Activated CD4-positive, alpha-beta memory T cell treated with anti-CD3 and anti-CD28 coated beads for 36 hours (primary cell): ENCODE measurements at regions of chr14 and their contacts with region 1.

Region 1: DNA sequence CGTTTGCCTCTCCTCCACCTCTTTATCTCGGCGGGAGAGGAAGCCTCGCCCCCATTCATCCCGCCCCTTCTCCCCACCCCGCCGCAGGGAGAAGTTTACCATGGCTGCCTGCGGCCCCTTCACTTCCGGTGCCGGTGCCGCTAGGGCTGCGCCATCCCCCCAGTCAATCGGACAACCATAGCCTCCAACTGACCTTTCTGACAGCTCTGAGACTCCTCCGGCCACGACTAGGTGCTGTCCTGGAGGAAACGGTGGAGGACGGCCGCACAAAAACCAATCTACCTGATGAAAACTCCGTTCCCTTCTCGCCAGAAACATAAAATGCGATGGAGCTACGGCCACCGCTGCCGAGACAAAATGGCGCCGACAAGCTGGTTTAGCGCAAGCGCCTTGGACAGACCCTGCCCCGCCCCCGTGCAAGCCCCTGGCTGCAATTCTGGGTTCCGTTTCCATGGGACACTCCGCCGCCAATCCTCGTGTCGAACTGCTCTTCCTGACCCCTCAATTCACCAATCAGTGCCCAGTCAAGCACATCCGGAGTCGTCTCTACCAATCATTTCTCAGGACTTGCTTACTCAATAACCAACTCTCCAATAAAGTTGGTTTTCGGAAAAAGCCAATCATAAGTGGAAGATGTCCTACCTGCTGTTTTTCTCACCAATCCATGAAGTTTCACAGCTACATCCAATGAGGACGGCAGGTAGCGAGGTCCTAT is 436 bp upstream of the ARID4A start:
- DNase-seq: peak; percentile 99
- H3K4me3 Mint-ChIP-seq: no peak overlapping the region
- H3K27ac Mint-ChIP-seq: no peak overlapping the region
- H3K4me1 Mint-ChIP-seq: peaks cover 35% of the 10 kb centered on the region
- H3K27me3 Mint-ChIP-seq: no peaks in the 10 kb centered on the region

Region 2: GRCh38 chr14:58152014-58152857 is 145.7 kb before region 1 on chr14 and contains the start of gene ARMH4:
- CTCF ChIA-PET with region 1: no interaction called
- POLR2A ChIA-PET with region 1: no interaction called
- intact Hi-C with region 1: loop called (anchors 5 kb)
- DNase-seq: peak; percentile 77
- H3K4me3 Mint-ChIP-seq: peak within 1 kb of the TSS; percentile 71
- H3K27ac Mint-ChIP-seq: no peak within 1 kb of the TSS
- H3K4me1 Mint-ChIP-seq: peaks cover 16% of the 10 kb centered on the region
- H3K27me3 Mint-ChIP-seq: peaks cover 52% of the 10 kb centered on the region
- total RNA-seq, gene ARMH4: 0.29 TPM in 1 of 2 experiments, not detected in the other

Region 3: DNA sequence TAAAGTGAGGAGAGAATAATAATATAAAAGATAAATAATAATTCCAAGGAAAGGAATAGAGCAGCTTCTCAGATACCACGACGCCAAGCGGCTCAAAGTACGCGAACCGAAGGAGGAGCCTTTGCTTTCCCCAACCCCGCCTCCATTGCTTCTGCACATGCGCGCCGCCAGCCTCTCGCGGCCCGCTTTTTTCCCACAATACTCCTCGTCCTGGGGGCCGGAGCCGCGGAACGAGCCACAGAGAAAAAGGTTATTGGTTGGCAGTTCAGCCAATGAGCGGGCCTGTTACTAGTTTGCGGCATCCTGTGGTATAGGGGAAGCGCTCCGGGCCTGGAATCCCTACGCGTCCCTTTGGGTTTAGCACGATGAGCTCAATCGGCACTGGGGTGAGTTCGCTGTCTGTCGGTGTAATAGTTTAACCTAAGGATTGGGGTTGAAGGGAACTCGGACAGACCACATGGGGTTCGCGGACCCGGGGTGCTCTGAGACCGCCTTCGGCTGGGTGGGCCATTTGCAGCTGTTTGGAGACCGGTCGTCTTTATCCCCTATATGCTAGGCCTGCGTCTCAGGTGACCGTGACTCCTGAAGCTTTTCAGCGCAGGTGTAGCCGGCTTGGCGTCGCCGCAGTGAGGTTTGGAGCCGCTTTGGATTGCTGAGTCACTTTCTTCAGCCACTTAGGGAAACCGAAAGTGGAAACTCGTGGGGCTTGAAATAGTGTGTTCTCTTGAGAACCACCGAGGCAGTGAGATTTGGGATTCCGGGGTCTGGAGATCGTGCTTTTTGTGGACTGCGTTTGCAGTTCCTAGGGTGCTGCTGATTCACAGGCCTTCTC is 53.1 kb before region 1 on chr14 and contains the start of gene PSMA3:
- CTCF ChIA-PET with region 1: interaction called, 8 read pairs
- POLR2A ChIA-PET with region 1: interaction called, 31 read pairs
- intact Hi-C with region 1: loop called (anchors 1 kb)
- DNase-seq: peak; percentile 99
- H3K4me3 Mint-ChIP-seq: peak within 1 kb of the TSS; percentile 86
- H3K27ac Mint-ChIP-seq: peak within 1 kb of the TSS; percentile 90
- H3K4me1 Mint-ChIP-seq: peaks cover 42% of the 10 kb centered on the region
- H3K27me3 Mint-ChIP-seq: no peaks in the 10 kb centered on the region
- total RNA-seq, gene PSMA3: 349 to 355 TPM

Region 4: DNA sequence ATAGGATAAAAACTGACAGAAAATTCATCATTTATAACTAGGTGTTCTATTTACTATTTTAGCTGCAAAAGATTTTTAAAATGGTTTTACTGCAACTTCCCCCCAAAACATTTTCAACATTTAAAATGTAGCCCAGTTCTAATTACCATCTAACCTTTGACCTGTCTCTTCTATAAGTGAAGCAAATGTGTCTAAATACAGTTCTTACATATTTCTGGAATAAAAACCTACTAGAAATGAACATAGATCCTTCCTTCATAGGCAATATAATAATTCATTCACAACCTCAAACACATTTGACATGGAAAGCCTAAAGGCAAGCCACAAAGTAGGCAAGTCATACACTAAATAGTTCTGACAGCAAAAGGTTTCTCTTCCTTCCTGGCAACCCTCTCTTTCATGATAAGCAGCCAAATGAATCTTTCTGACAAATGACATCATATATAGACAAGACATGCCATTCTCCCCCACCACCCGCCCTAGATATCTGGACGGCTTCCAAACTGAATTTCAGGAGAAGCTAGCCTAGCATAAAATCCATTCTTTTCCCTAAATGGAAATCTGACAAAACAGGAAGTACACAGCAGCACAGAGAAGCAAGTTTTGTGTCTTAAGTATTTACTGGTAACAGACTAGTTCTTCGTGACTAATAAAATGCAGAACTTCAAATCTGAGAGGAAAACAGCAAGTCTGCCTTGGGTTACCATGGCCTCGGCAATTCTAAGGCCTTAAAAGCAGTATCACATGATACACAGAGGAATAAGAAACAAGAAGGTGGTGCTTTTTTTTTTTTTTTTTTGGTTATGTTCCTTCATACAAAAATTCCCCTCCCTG is 16.7 kb before region 1 on chr14:
- CTCF ChIA-PET with region 1: interaction called, 4 read pairs
- POLR2A ChIA-PET with region 1: interaction called, 10 read pairs
- intact Hi-C with region 1: loop called (anchors 1 kb)
- DNase-seq: peak; percentile 56
- H3K4me3 Mint-ChIP-seq: peak overlapping the region; percentile 37
- H3K27ac Mint-ChIP-seq: peak overlapping the region; percentile 91
- H3K4me1 Mint-ChIP-seq: peaks cover 66% of the 10 kb centered on the region
- H3K27me3 Mint-ChIP-seq: no peaks in the 10 kb centered on the region

Region 5: GRCh38 chr14:58427281-58428117 is 129.6 kb after region 1 on chr14 and contains the starts of genes KIAA0586 and TIMM9:
- CTCF ChIA-PET with region 1: no interaction called
- POLR2A ChIA-PET with region 1: interaction called, 37 read pairs
- intact Hi-C with region 1: loop called (anchors 1 kb)
- DNase-seq: peak; percentile 98
- H3K4me3 Mint-ChIP-seq: peak within 1 kb of the TSS; percentile 86
- H3K27ac Mint-ChIP-seq: peak within 1 kb of the TSS; percentile 91
- H3K4me1 Mint-ChIP-seq: peaks cover 45% of the 10 kb centered on the region
- H3K27me3 Mint-ChIP-seq: peaks cover 2% of the 10 kb centered on the region
- total RNA-seq, gene KIAA0586: 30.3 to 34.9 TPM
- total RNA-seq, gene TIMM9: 61.4 to 66.7 TPM